Endothelial cell of umbilical vein (primary cell): ENCODE measurements at regions of chr14 and their contacts with region 1.

Region 1: DNA sequence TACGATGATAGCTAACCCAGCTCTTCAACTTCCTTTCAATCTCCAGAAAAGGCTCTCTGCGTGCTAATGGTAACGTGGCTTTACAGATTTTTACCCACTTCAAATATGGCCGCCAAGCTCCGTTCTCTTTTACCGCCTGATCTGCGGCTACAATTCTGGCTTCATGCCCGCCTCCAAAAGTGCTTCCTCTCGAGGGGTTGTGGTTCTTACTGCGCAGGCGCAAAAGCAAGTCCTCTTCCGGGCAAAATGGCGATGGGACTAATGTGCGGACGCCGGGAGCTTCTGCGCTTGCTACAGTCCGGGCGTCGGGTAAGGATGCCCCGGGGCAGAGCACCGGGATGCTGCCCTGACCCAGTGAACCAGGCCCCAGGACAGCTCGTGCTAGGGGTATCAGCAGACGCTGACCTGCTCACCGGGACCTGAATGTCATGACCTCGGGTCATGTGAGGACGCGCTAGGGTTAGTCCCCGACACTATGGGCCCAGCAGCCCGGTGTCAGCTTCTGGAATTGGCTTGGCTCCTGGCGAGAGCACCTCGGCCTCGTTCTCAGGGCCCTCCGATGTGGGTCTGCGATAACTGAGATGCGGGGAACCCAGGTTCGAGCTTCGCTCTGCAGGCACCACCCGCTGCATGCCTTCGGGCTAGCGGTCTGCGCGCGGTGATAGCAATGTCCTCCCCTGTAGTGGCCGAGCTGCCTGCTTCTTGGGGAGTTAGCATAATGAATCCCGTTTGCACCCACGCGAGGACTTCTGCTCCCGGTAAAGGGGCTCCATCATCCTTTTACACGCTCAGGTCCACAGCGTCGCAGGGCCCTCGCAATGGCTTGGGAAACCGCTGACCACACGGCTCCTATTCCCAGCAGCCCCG is at the start of gene OXA1L:
- DNase-seq: peak; percentile 98
- H3K4me3 ChIP-seq: peak within 1 kb of the TSS; percentile 77 to 99 (median 92)
- H3K27ac ChIP-seq: peak within 1 kb of the TSS; percentile 84
- H3K4me1 ChIP-seq: peaks cover 24% of the 10 kb centered on the region
- H3K27me3 ChIP-seq: no peaks in the 10 kb centered on the region
- CTCF ChIP-seq: no peak
- POLR2A ChIP-seq: peak; percentile 81
- total RNA-seq, gene OXA1L: 200 and 212 TPM in 2 replicates

Region 2: GRCh38 chr14:22589096-22589839 is 177.4 kb before region 1 on chr14 and contains the start of gene DAD1:
- CTCF ChIA-PET with region 1: no interaction called
- POLR2A ChIA-PET with region 1: interaction called, 3 read pairs
- dilution Hi-C with region 1: no loop called
- intact Hi-C with region 1: loop called (anchors 1 kb)
- DNase-seq: peak; percentile 100
- H3K4me3 ChIP-seq: peak within 1 kb of the TSS; percentile 70 to 99 (median 92)
- H3K27ac ChIP-seq: peak within 1 kb of the TSS; percentile 84
- H3K4me1 ChIP-seq: peaks cover 23% of the 10 kb centered on the region
- H3K27me3 ChIP-seq: peaks cover 3 to 4% of the 10 kb centered on the region in 2 experiments
- CTCF ChIP-seq: no peak
- POLR2A ChIP-seq: peak; percentile 98
- total RNA-seq, gene DAD1: 299 and 304 TPM in 2 replicates

Region 3: DNA sequence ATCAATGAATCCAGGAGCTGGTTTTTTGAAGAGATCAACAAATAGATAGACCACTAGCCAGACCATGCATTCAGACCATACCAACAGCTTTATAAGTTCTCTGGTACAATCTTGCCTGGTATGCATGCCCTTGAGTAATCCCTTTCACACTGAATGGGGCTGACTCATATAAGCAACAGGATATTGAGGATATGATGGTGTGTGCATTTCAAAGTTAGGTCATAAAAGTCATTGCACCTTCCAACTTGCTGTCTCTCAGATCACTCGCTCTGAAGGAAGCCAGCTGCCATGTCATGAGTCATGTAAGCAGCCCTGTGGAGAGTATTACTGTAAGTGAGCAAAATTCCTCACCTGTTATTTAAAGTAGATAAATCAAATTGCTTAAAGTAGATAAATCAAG is 77.5 kb before region 1 on chr14:
- CTCF ChIA-PET with region 1: interaction called, 8 read pairs
- POLR2A ChIA-PET with region 1: interaction called, 3 read pairs
- dilution Hi-C with region 1: no loop called
- intact Hi-C with region 1: loop called (anchors 1 kb)
- DNase-seq: peak; percentile 96
- H3K4me3 ChIP-seq: no peak overlapping the region
- H3K27ac ChIP-seq: peak overlapping the region; percentile 91
- H3K4me1 ChIP-seq: peaks cover 32% of the 10 kb centered on the region
- H3K27me3 ChIP-seq: no peaks in the 10 kb centered on the region
- CTCF ChIP-seq: no peak
- POLR2A ChIP-seq: peak; percentile 40

Region 4: GRCh38 chr14:22713631-22713950 is 53.1 kb before region 1 on chr14:
- CTCF ChIA-PET with region 1: interaction called, 5 read pairs
- POLR2A ChIA-PET with region 1: interaction called, 7 read pairs
- dilution Hi-C with region 1: no loop called
- intact Hi-C with region 1: loop called (anchors 2 kb)
- DNase-seq: no peak
- H3K4me3 ChIP-seq: peak overlapping the region in 1 of 3 experiments; percentile 13
- H3K27ac ChIP-seq: peak overlapping the region; percentile 28
- H3K4me1 ChIP-seq: peaks cover 23% of the 10 kb centered on the region
- H3K27me3 ChIP-seq: no peaks in the 10 kb centered on the region
- CTCF ChIP-seq: no peak
- POLR2A ChIP-seq: no peak

Region 5: DNA sequence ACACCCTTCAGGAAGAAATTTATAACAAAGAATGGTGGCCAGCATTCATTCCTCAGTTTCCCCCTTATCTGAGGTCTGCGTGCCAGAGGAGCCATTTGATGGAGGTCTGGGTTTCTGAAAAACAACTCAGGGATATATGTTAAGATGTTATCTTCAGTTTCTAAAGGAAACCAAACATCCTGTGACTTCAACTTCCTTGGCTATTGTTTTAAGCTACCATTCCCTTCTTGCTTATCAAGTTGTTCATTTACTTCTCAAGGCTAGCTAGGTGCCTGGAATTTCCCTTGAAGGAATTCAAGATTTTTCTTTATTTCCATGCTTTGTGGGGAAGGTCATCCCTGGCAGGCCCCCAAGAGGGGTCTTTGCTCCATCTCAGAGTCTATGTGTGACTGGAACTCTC is 27.3 kb before region 1 on chr14:
- CTCF ChIA-PET with region 1: interaction called, 10 read pairs
- POLR2A ChIA-PET with region 1: no interaction called
- dilution Hi-C with region 1: no loop called
- intact Hi-C with region 1: loop called (anchors 1 kb)
- DNase-seq: peak; percentile 88
- H3K4me3 ChIP-seq: no peak overlapping the region
- H3K27ac ChIP-seq: peak overlapping the region; percentile 97
- H3K4me1 ChIP-seq: peaks cover 30% of the 10 kb centered on the region
- H3K27me3 ChIP-seq: no peaks in the 10 kb centered on the region
- CTCF ChIP-seq: no peak
- POLR2A ChIP-seq: no peak

Region 6: GRCh38 chr14:23237772-23238594 is 471.3 kb after region 1 on chr14 and contains the start of gene RNF212B:
- CTCF ChIA-PET with region 1: no interaction called
- POLR2A ChIA-PET with region 1: no interaction called
- dilution Hi-C with region 1: no loop called
- intact Hi-C with region 1: no loop called
- DNase-seq: peak; percentile 75
- H3K4me3 ChIP-seq: no peak within 1 kb of the TSS
- H3K27ac ChIP-seq: no peak within 1 kb of the TSS
- H3K4me1 ChIP-seq: peaks cover 5% of the 10 kb centered on the region
- H3K27me3 ChIP-seq: peaks cover 0 to 3% of the 10 kb centered on the region in 2 experiments
- CTCF ChIP-seq: no peak
- POLR2A ChIP-seq: no peak
- total RNA-seq, gene RNF212B: not detected in 2 replicates